B cell (primary cell): ENCODE measurements at regions of chr17 and their contacts with region 1.

Region 1: DNA sequence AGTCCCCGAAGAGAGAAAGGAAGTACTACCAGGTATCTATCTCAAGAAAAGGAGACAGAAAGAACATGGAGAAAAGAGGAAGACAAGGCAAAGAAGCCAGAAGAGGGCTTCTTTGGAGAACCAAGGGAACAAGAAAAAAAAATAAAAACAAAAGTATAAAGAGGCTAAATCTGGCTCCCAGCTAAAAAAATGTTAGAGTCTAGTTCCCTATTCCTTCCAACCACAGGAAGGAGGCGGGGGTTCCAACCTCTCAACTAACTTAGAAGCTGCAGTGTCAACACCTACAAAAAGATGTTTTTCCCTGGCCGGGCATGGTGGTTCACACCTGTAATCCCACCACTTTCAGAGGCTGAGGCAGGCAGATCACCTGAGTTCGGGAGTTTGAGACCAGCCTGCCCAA is 13.4 kb downstream of the UTP6 start:
- DNase-seq: peak; percentile 69
- ATAC-seq: peak; percentile 36
- H3K4me3 ChIP-seq: peak overlapping the region in 1 of 5 experiments; percentile 43
- H3K4me3 Mint-ChIP-seq: peak overlapping the region; percentile 82
- H3K27ac ChIP-seq: peak overlapping the region; percentile 89 to 92
- H3K27ac Mint-ChIP-seq: peak overlapping the region; percentile 96
- H3K4me1 ChIP-seq: peaks cover 38 to 54% of the 10 kb centered on the region in 2 donors
- H3K4me1 Mint-ChIP-seq: peaks cover 36% of the 10 kb centered on the region
- H3K27me3 ChIP-seq: no peaks in the 10 kb centered on the region
- H3K27me3 Mint-ChIP-seq: no peaks in the 10 kb centered on the region
- CTCF ChIP-seq: no peak

Region 2: GRCh38 chr17:31321481-31321880 is 566.6 kb before region 1 on chr17 and contains the start of gene EVI2A:
- CTCF ChIA-PET with region 1: no interaction called
- POLR2A ChIA-PET with region 1: no interaction called
- intact Hi-C with region 1: loop called (anchors 10 kb)
- DNase-seq: peak; percentile 81
- ATAC-seq: peak; percentile 71
- H3K4me3 ChIP-seq: peak within 1 kb of the TSS; percentile 40 to 98 (median 69)
- H3K4me3 Mint-ChIP-seq: peak within 1 kb of the TSS; percentile 87
- H3K27ac ChIP-seq: peak within 1 kb of the TSS; percentile 40 to 91
- H3K27ac Mint-ChIP-seq: peak within 1 kb of the TSS; percentile 69
- H3K4me1 ChIP-seq: peaks cover 19 to 32% of the 10 kb centered on the region in 2 donors
- H3K4me1 Mint-ChIP-seq: peaks cover 37% of the 10 kb centered on the region
- H3K27me3 ChIP-seq: no peaks in the 10 kb centered on the region
- H3K27me3 Mint-ChIP-seq: no peaks in the 10 kb centered on the region
- CTCF ChIP-seq: no peak
- total RNA-seq, gene EVI2A: 47.3 and 49.3 TPM in 2 replicates

Region 3: DNA sequence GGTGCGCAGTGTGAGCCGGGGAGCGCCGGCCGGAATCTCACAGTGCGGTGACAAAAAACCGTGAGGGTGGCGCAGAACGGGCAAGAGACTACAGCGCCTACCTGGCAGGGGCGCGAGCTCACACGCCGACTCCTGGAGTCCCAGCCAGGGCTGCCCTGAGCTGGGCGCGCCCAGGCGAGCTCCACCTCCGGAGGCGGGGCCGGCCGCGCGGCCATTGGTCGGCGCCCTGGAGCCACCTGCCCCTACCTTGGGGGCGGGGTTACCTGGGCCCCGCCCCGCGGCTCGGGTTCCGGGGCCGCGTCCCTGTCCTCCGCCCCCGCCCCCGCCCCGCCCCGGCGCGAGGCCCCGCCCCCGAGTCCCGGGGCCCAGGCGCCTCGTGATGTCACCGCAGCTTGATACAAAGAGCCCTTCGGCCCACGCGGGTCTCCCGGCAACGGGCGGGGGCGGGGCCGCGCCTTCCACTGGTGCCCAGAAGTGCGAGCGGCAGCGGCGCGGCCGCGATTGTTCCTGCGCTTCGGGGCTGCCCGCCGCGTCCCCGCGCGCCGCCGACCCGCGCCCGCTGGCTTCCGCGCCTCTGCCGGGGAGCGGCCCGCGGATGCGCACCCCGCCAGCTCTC is 400.4 kb before region 1 on chr17:
- CTCF ChIA-PET with region 1: no interaction called
- POLR2A ChIA-PET with region 1: interaction called, 3 read pairs
- intact Hi-C with region 1: loop called (anchors 1 kb)
- DNase-seq: peak; percentile 96
- ATAC-seq: peak; percentile 85
- H3K4me3 ChIP-seq: peak overlapping the region in 4 of 5 experiments; percentile 74 to 84 (median 82)
- H3K4me3 Mint-ChIP-seq: peak overlapping the region; percentile 94
- H3K27ac ChIP-seq: peak overlapping the region; percentile 65 to 90
- H3K27ac Mint-ChIP-seq: peak overlapping the region; percentile 95
- H3K4me1 ChIP-seq: peaks cover 49 to 54% of the 10 kb centered on the region in 2 donors
- H3K4me1 Mint-ChIP-seq: peaks cover 52% of the 10 kb centered on the region
- H3K27me3 ChIP-seq: no peaks in the 10 kb centered on the region
- H3K27me3 Mint-ChIP-seq: no peaks in the 10 kb centered on the region
- CTCF ChIP-seq: peak; percentile 11

Region 4: DNA sequence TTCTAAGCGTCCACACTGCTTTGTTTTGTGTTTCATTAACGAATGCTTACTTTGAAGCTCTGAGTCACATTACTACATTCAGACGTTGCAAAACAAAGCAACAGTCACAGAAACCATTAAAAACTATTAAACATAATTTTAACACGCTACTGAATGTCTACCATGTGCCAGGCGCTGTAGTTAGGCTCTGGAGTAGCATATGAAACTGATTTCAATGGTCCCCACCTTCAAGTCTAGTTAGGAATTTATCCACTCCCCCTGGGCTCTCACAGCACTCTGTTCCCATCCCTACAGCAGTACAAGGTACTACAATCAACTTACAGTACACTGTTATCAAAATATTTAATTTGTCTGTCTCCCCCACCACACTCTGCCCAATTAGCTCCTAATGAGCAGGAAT is 12.8 kb after region 1 on chr17:
- CTCF ChIA-PET with region 1: interaction called, 53 read pairs
- POLR2A ChIA-PET with region 1: interaction called, 12 read pairs
- intact Hi-C with region 1: loop called (anchors 1 kb)
- DNase-seq: no peak
- ATAC-seq: no peak
- H3K4me3 ChIP-seq: peak overlapping the region; percentile 76 to 95 (median 90)
- H3K4me3 Mint-ChIP-seq: no peak overlapping the region
- H3K27ac ChIP-seq: peak overlapping the region; percentile 47 to 78
- H3K27ac Mint-ChIP-seq: no peak overlapping the region
- H3K4me1 ChIP-seq: peaks cover 6 to 10% of the 10 kb centered on the region in 2 donors
- H3K4me1 Mint-ChIP-seq: peaks cover 5% of the 10 kb centered on the region
- H3K27me3 ChIP-seq: no peaks in the 10 kb centered on the region
- H3K27me3 Mint-ChIP-seq: no peaks in the 10 kb centered on the region
- CTCF ChIP-seq: no peak